ENCODE measurements at regions of chr14 and their contacts with region 1.

Region 1: DNA sequence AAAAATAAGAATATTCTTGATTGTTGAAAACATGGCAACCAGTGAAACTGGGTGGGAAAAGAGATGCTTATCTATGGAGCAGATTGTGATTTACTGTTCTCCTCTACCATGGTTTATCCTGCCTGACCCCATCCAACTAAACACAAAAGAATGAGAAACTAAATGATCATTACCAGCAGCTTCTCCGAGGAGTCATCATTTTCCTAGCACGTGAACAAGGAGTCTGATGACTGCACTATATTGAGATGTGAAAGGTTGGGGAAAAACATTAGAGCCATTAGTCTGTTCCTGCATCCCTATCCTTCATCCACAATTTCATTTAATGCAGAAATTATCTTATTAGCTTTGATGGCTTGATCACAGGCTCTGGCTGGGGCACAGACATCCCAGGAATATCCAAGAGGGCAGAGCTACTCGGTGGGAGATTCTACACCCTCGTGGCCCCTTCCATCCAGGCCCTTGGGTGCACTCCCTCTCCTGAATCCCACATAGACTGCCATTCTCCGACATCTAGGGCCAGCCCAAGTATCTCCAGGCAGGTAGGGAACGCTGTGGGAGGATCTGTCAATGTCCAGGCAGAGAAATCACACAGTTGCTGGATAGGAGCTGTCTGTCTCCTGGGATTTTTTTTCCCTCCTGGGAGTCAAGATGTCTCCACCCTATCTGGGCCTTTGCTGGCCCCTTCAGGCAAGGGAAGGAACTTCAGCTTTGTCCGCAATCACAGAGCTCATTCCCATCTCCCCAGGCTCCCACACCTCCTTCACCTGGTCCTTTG is 43.3 kb upstream of the DHRS4 start:
- DNase-seq: peak; percentile 46 to 61 (median 56)
- ATAC-seq: peak; percentile 89
- H3K4me3 ChIP-seq: no peak overlapping the region
- H3K27ac ChIP-seq: no peak overlapping the region
- H3K4me1 ChIP-seq: no peaks in the 10 kb centered on the region
- H3K27me3 ChIP-seq: no peaks in the 10 kb centered on the region
- CTCF ChIP-seq: peak; percentile 63 to 77 (median 73)
- EP300 ChIP-seq: no peak
- POLR2A ChIP-seq: no peak
- RAD21 ChIP-seq: peak; percentile 56 to 75

Region 2: GRCh38 chr14:23631702-23632460 is 278.4 kb before region 1 on chr14:
- CTCF ChIA-PET with region 1: interaction called, 13 read pairs
- POLR2A ChIA-PET with region 1: no interaction called
- in situ Hi-C with region 1: no loop called
- intact Hi-C with region 1: loop called (anchors 10 kb)
- DNase-seq: peak; percentile 63 to 73 (median 66)
- ATAC-seq: peak; percentile 89
- H3K4me3 ChIP-seq: no peak overlapping the region
- H3K27ac ChIP-seq: no peak overlapping the region
- H3K4me1 ChIP-seq: no peaks in the 10 kb centered on the region; a peak in 1 of 5 replicates
- H3K27me3 ChIP-seq: no peaks in the 10 kb centered on the region; a peak in 1 of 5 replicates
- CTCF ChIP-seq: peak; percentile 74 to 89 (median 82)
- EP300 ChIP-seq: no peak
- POLR2A ChIP-seq: no peak
- RAD21 ChIP-seq: peak; percentile 70 to 81

Region 3: DNA sequence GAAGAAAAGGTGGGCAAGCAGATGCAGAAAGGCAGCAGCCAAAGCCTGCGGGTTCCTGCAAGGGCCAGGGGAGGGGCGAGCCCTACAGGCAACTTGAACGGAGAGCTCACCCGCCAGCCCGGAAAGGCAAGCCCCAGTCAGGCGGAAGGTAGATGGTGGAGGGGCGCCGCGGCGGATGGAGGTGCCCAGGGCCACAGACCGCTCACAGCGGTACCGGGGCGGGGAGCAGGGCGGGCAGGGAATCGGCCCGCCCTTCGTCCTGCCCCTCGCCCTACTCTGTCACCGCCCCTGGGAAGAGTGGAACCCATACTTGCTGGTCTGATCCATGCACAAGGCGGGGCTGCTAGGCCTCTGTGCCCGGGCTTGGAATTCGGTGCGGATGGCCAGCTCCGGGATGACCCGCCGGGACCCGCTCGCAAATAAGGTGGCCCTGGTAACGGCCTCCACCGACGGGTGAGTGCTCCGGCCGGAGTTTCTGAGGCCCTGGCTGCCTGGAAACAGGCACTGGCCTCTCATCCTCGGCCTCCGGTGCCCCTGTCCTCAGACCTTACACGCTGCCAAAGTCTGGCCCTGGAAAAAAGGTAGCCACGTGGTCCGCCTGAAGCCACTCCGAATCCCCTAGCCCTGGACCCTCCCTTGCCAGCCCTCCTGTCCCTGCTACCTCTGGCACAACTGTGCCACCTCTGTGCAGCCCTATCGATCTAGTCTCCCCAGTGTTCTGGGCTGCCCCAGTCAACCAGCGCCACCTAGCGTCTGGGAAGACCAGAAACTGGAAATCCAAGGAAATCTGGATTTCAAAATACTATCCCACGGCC is 43.4 kb after region 1 on chr14 and contains the start of gene DHRS4:
- CTCF ChIA-PET with region 1: no interaction called
- POLR2A ChIA-PET with region 1: no interaction called
- in situ Hi-C with region 1: no loop called
- intact Hi-C with region 1: no loop called
- DNase-seq: peak; percentile 66 to 76 (median 70)
- ATAC-seq: peak; percentile 97
- H3K4me3 ChIP-seq: peak within 1 kb of the TSS; percentile 63
- H3K27ac ChIP-seq: peak within 1 kb of the TSS; percentile 55
- H3K4me1 ChIP-seq: peaks cover 0 to 10% of the 10 kb centered on the region in 2 experiments; a peak in 2 of 5 replicates
- H3K27me3 ChIP-seq: no peaks in the 10 kb centered on the region
- CTCF ChIP-seq: peak; percentile 80 to 83 (median 82)
- EP300 ChIP-seq: no peak
- POLR2A ChIP-seq: peak; percentile 65
- RAD21 ChIP-seq: peak; percentile 67 to 73
- polyA plus RNA-seq, gene DHRS4: 0.51 to 1.6 TPM